AG04449 (cell line): ENCODE measurements at regions of chr17 and their contacts with region 1.

Region 1: GRCh38 chr17:76458580-76459490 is 5.9 kb upstream of the UBE2O start:
- DNase-seq: no peak
- H3K4me3 ChIP-seq: no peak overlapping the region
- CTCF ChIP-seq: peak; percentile 87

Region 2: DNA sequence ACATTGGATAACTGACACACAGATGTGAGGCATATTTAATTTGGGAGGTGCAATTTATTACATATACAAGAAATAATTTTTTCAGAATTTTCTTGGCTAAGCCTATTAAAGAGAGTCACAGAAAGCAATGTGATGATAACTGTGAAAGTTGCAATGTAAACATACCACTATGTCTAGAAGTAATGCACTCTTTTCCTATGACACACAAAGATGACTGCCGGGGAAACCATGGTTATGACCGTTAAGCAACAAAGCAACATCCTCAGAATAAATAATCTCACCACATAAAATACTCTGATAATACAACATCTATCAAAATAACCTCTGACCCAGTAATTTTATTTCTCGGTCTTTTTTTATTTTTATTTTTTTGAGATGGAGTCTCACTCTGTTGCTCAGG is 140.2 kb before region 1 on chr17:
- CTCF ChIA-PET with region 1: no interaction called
- POLR2A ChIA-PET with region 1: no interaction called
- DNase-seq: peak; percentile 16
- H3K4me3 ChIP-seq: no peak overlapping the region
- CTCF ChIP-seq: no peak

Region 3: GRCh38 chr17:76384222-76384986 is 74.4 kb before region 1 on chr17 and contains the start of gene SPHK1:
- CTCF ChIA-PET with region 1: interaction called, 17 read pairs
- POLR2A ChIA-PET with region 1: no interaction called
- DNase-seq: no peak
- H3K4me3 ChIP-seq: peak within 1 kb of the TSS; percentile 76
- CTCF ChIP-seq: no peak

Region 4: GRCh38 chr17:76414334-76415295 is 44.2 kb before region 1 on chr17:
- CTCF ChIA-PET with region 1: interaction called, 75 read pairs
- POLR2A ChIA-PET with region 1: no interaction called
- DNase-seq: no peak
- H3K4me3 ChIP-seq: no peak overlapping the region
- CTCF ChIP-seq: no peak

Region 5: DNA sequence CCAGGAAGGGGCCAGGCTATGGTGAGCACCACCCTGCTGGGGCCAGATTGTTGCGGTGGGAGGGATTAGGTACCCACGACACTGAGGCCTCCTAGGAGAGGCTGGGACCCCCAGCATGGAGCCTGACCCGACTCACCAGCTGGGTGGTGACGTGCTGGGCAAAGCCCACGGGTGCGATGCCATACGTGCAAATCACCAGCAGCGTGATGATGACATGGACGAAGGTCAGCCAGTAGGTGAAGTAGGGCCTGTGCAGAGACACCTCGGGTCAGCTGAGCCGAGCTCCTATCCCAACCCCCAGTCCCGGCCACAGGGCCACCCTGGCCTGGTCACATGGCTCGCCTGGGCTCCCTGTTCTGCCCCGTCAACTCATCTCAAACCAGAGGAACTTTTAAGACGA is 16.1 kb after region 1 on chr17:
- CTCF ChIA-PET with region 1: interaction called, 69 read pairs
- POLR2A ChIA-PET with region 1: no interaction called
- DNase-seq: no peak
- H3K4me3 ChIP-seq: no peak overlapping the region
- CTCF ChIP-seq: no peak

Region 6: GRCh38 chr17:76547184-76547641 is 88.4 kb after region 1 on chr17:
- CTCF ChIA-PET with region 1: interaction called, 13 read pairs
- POLR2A ChIA-PET with region 1: no interaction called
- DNase-seq: no peak
- H3K4me3 ChIP-seq: no peak overlapping the region
- CTCF ChIP-seq: peak; percentile 68